ENCODE measurements at regions of chr11 and their contacts with region 1.

Region 1: GRCh38 chr11:68297812-68298658 is 14.4 kb upstream of the LRP5 start:
- DNase-seq: peak; percentile 74
- H3K4me3 ChIP-seq: no peak overlapping the region
- H3K27ac ChIP-seq: no peak overlapping the region
- H3K4me1 ChIP-seq: peaks cover 3% of the 10 kb centered on the region
- H3K27me3 ChIP-seq: peaks cover 0 to 2% of the 10 kb centered on the region in 2 experiments
- CTCF ChIP-seq: peak; percentile 97 to 98
- POLR2A ChIP-seq: no peak

Region 2: DNA sequence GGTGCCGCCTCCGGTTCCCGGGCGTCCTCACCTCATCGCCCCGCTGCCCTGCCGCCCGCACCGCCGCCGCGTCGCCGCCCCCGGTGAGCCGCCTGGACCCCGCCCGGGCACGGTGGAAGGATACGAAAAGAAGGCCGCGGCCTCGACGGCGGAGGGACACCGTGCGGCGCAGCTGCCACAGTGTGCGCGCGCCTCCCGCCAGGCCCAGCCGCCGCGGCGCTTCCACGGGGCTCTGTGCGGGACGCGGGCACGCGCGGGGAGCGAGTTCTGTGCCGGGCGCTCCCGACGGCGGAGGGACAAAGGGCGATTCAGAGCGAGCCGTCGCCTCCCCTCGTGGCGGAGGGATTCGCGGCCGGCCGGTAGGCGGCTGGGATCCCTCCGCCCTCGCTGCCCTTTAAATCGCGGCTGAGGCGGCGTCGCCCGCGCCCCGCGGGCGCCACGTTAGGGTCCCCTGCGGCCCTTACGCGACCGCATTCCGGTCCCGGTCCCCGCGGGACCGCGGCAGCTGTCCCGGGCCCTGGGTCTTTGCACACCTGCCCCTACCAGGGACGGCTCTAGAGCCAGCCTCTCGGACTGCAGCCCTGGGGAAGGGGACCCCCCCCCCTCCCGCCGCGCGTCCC is 84.4 kb before region 1 on chr11:
- CTCF ChIA-PET with region 1: interaction called, 37 read pairs
- POLR2A ChIA-PET with region 1: no interaction called
- dilution Hi-C with region 1: no loop called
- intact Hi-C with region 1: loop called (anchors 2 kb)
- DNase-seq: peak; percentile 87
- H3K4me3 ChIP-seq: peak overlapping the region; percentile 49 to 84 (median 75)
- H3K27ac ChIP-seq: peak overlapping the region; percentile 88
- H3K4me1 ChIP-seq: peaks cover 17% of the 10 kb centered on the region
- H3K27me3 ChIP-seq: peaks cover 0 to 6% of the 10 kb centered on the region in 2 experiments
- CTCF ChIP-seq: no peak
- POLR2A ChIP-seq: peak; percentile 99

Region 3: DNA sequence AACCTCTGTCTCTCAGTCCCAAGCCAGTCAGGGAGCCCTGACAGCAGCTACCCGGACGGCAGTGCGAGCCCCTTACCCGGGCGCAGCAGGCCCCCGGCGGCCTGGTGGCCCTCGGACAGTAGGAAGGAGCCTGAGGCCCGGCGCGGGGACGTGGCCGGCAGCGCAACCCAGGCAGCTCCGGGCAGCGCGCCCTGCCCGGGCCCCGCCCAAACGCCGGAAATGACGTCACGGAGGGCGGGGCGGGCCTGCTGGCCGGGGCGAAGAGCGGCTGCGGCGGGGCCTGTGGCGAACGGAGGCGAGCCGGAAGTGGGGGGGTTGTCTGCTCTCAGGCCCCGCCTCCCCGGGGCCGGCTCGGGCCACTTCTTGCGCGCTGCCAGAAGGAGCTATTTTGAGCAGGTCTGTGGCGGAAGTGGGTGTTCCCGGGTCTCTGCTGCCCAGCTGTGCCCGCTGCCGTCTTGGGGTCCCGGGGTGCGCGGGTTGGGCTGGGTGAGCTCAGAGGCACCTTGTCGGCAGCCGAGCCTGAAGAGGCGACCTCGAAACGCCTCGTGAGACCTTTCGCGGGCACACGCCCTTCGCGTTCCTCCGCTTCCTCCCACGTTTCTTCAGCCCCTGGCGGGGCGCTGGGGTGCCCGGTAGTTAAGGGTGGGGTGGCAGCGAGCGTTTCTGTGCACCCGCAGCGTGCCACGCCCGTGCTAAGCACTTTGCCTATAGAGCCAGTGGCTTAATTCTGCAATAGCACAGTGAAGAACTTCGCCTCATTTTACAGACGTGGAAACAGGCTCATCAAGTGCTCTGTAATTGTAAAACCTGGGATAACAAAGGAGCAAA is 26.0 kb before region 1 on chr11 and contains the start of gene C11orf24:
- CTCF ChIA-PET with region 1: interaction called, 51 read pairs
- POLR2A ChIA-PET with region 1: interaction called, 4 read pairs
- dilution Hi-C with region 1: no loop called
- intact Hi-C with region 1: loop called (anchors 1 kb)
- DNase-seq: peak; percentile 90
- H3K4me3 ChIP-seq: peak within 1 kb of the TSS; percentile 59 to 68 (median 60)
- H3K27ac ChIP-seq: peak within 1 kb of the TSS; percentile 71
- H3K4me1 ChIP-seq: peaks cover 7% of the 10 kb centered on the region
- H3K27me3 ChIP-seq: no peaks in the 10 kb centered on the region
- CTCF ChIP-seq: no peak
- POLR2A ChIP-seq: peak; percentile 77
- total RNA-seq, gene C11orf24: 26.4 and 28.4 TPM in 2 replicates

Region 4: DNA sequence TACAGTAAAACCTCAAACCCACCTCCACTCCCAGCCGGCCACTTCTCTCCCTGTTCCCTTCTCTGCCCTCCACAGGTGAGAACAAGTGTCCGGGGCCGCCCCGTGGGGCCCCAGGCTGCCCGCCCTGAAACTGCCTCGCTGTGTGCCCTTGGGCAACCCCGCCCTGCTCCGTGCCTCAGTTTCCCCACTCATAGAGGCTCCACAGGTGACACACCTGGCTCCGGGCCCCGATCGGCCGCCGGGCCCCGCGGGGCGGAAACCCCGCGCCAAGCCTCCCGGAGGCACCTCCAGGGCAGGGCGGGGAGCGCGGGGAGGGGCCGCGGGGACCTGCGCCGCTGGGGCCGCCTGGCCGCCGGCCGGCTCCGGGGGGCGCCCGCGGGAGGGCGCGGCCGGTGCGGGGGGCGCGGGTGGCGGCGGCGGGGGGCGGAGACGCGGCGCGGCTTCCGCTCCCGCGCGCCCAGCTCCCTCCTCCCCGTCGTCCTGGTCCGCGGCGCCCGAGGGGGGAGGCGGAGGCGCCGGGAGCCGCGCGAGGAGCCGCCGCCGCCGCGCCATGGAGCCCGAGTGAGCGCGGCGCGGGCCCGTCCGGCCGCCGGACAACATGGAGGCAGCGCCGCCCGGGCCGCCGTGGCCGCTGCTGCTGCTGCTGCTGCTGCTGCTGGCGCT is 14.2 kb after region 1 on chr11 and contains the start of gene LRP5:
- CTCF ChIA-PET with region 1: interaction called, 16 read pairs
- POLR2A ChIA-PET with region 1: no interaction called
- dilution Hi-C with region 1: no loop called
- intact Hi-C with region 1: no loop called
- DNase-seq: no peak
- H3K4me3 ChIP-seq: peak within 1 kb of the TSS; percentile 33 to 88 (median 78)
- H3K27ac ChIP-seq: peak within 1 kb of the TSS; percentile 69
- H3K4me1 ChIP-seq: peaks cover 25% of the 10 kb centered on the region
- H3K27me3 ChIP-seq: no peaks in the 10 kb centered on the region
- CTCF ChIP-seq: no peak
- POLR2A ChIP-seq: no peak
- total RNA-seq, gene LRP5: 44.3 and 51.8 TPM in 2 replicates

Region 5: DNA sequence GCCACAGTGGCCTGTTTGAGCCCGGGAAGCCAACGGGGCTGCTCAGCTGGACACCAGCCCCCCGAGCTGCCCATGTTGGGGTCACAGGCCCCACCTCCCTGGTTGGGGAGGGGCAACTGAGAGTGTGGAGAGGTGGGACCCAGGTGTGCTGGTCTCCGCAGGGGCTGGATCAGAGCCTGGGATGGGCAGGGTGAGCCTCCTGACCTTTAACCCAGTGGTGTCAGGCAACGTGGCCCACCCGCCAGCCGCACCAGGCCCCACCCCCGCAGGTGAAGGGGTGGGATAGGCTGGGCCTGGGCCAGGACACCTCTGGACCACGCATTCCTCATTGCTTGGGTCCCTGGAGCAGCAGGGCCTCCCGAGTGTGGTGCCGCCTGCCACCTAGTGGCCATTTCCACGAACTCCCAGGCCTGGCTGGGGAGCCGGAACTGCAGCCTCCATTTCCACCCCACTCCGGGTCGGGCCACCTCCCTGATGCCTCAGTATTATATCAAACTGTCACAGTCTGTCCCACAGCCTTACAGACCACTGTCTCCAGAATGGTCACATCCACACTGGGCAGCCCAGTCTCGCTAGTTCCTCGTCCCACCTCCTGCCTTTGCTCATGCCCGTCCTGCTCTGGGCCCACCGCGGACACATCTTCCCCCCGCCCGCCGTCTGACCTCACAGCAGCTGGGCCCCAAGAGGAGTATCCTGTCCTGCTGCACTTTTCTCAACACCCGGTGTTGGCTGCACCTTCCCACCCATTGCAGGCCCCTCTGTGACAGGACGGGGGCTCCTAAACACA is 149.2 kb after region 1 on chr11:
- CTCF ChIA-PET with region 1: interaction called, 4 read pairs
- POLR2A ChIA-PET with region 1: no interaction called
- dilution Hi-C with region 1: no loop called
- intact Hi-C with region 1: loop called (anchors 1 kb)
- DNase-seq: peak; percentile 58
- H3K4me3 ChIP-seq: no peak overlapping the region
- H3K27ac ChIP-seq: no peak overlapping the region
- H3K4me1 ChIP-seq: no peaks in the 10 kb centered on the region
- H3K27me3 ChIP-seq: no peaks in the 10 kb centered on the region
- CTCF ChIP-seq: peak; percentile 91
- POLR2A ChIP-seq: no peak